ENCODE measurements at regions of chr7 and their contacts with region 1.

Region 1: DNA sequence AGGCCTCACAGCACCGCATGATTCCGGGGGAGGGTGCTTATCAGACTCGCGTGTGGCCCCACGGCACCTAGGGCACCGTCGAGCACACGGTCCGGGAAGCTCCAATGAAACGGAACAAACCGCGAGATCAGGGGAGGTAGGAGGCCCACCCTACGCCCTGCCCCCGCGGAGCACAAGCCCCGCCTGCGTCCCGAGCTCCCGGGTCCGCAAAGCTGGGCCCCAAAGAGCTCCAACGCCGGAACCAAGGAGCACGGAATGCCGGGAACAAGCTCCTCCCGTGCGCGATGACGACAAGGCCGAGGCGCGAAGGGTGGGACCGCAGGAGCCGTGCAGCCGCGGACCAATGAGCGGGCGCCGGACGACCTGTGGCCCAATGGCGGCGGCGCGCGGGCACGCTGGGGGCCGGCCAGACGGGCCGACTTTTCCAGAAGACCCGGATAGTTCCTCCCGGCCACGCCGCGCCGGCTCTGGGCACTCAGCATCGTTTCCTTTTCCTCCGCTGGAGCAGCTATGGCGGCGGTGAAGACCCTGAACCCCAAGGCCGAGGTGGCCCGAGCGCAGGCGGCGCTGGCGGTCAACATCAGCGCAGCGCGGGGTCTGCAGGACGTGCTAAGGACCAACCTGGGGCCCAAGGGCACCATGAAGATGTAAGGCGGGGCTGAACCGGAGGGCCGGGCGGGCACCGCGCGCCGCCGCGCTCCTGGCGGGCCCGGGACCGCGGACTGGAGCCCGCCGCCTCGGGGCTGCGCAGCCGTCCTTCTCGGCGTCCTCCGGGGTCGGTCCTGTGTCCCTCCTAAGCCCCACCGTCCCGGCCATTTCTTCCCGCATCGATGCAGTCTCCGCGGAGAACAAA is at the starts of genes CCT6A and PSPH:
- DNase-seq: peak; percentile 83

Region 2: GRCh38 chr7:55939514-55940123 is 111.9 kb before region 1 on chr7:
- CTCF ChIA-PET with region 1: no interaction called
- POLR2A ChIA-PET with region 1: no interaction called
- DNase-seq: no peak

Region 3: GRCh38 chr7:56033671-56034432 is 17.7 kb before region 1 on chr7:
- CTCF ChIA-PET with region 1: interaction called, 4 read pairs
- POLR2A ChIA-PET with region 1: interaction called, 37 read pairs
- DNase-seq: peak; percentile 79

Region 4: DNA sequence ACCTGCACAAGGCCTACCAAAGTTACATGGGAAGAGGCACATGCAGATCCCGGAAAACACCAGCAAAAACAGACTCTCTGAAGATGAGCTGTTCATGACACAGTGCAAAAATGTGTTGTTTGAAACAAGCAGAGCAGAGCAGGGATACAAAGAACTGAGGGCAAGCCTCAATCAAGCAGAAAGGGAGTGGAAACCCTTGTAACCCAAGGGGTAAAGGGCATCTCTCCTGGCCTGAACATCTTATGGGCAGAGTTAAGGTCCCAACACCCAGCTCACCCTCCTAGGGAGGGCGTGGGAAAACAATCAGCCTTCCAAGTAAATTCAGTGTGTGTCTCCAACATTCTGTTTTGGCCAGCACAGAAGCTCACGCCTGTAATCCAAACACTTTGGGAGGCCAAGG is 10.8 kb before region 1 on chr7:
- CTCF ChIA-PET with region 1: no interaction called
- POLR2A ChIA-PET with region 1: interaction called, 11 read pairs
- DNase-seq: no peak

Region 5: GRCh38 chr7:56063882-56064625 is 12.5 kb after region 1 on chr7 and contains the start of gene SUMF2:
- CTCF ChIA-PET with region 1: interaction called, 3 read pairs
- POLR2A ChIA-PET with region 1: interaction called, 79 read pairs
- DNase-seq: peak; percentile 94

Measured in HEK293T (cell line).